ENCODE measurements at regions of chr10 and their contacts with region 1.

Region 1: DNA sequence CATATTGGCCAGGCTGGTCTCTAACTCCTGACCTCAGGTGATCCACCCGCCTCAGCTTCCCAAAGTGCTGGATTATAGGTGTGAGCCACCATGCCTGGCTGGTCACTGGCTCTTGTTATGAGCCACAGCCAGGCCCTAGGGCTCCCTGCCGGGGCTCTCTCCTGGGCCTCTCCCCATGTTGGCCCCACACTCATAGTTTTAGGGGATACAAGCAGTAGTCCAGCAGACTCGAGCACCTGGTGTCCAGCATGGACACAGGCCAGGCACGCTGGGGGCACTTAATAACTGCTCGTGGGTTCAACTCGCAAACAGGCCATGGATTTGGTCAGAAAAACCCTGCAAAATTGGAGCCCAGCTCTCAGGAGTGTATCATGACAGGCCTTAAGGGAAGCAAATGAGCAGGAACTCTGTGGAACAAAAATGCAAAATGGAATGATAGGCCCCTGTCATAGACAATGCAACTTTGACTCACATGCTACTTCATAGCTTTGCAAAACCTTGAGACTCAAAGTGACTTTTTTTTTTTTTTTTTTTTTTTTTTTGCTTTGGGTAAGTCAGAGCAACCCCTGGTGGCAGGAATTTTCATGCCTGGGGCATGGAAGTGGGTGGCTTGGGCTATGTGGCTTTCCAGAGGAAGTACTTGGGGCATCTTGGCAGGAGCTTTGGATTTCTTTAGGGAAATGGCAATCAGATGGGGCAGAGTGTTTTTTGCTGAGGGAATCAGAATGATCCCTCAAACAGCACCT is 62.5 kb downstream of the TACC2 start:
- DNase-seq: peak; percentile 56
- ATAC-seq: peak; percentile 21

Region 2: DNA sequence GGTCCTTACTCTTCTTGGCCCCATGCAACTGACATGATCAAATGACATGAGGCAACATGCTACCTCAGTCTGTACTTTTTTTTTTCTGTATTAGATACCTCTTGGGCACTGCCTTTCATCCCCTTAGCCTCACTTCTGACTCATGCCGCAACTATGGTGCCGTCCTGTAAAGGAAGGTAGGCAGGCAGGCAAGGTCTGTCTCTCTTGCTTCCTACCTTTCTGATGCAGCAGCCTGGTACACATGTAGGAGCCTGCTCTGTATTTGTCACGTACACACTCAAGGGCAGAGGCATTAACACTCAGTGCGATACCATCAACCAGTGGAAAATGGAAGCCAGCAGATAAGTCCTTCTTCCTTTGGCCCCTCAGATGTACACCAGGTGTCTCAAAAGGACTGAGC is 270.3 kb before region 1 on chr10:
- intact Hi-C with region 1: no loop called
- DNase-seq: no peak
- ATAC-seq: no peak

Region 3: GRCh38 chr10:121974535-121975294 is 76.7 kb before region 1 on chr10 and contains the start of gene NSMCE4A:
- intact Hi-C with region 1: loop called (anchors 10 kb)
- DNase-seq: peak; percentile 86
- ATAC-seq: peak; percentile 96
- total RNA-seq, gene NSMCE4A: 23.7 TPM

Region 4: GRCh38 chr10:122112625-122113160 is 61.3 kb after region 1 on chr10:
- intact Hi-C with region 1: loop called (anchors 2 kb)
- DNase-seq: peak; percentile 91
- ATAC-seq: peak; percentile 90

Region 5: DNA sequence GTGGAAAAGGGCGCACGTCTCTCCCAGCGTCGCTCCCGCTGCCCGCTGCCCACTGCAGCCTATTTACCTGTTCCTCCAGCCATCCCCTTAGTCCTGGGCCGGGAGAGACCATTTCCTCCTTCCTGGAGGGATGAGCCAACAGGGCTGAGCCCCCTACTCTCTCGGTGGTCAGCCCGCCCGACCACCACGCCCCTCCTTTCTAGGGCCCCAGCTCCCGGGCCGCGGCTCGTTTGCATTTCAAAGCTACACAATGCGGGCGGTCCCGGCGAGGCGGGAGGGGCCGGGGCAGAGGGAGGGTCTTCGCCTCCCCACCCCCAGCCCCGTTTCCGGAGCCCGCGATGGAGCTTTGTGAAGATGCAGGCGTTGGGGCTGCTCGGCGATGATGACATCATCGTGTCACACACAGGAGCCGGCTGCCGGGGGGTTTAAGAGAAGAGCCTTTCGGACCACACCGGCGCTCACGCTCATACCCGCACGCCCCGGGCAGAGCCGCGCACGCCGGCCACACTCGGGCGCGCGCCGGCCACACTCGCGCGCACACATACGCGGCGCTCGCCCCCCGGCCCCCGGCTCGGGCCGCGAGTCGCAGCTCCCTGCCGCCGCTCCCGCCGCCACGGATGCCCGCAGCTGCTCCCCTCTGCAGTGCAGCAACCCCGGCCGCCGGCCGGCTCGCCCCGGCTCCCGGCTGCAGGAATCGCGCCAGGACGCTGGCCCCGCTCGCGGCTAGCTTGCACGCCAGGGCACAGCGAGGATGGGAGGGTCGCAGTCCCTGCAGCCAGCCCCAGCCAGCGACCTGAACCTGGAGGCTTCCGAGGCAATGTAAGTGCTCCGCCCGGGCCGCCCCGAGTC is 112.0 kb after region 1 on chr10:
- intact Hi-C with region 1: no loop called
- DNase-seq: no peak
- ATAC-seq: no peak

Region 6: GRCh38 chr10:122276611-122277208 is 225.3 kb after region 1 on chr10:
- intact Hi-C with region 1: no loop called
- DNase-seq: no peak
- ATAC-seq: no peak

Measured in Right ventricle myocardium superior (tissue), 1 donor.